ENCODE measurements at regions of chr10 and their contacts with region 1.

Region 1: DNA sequence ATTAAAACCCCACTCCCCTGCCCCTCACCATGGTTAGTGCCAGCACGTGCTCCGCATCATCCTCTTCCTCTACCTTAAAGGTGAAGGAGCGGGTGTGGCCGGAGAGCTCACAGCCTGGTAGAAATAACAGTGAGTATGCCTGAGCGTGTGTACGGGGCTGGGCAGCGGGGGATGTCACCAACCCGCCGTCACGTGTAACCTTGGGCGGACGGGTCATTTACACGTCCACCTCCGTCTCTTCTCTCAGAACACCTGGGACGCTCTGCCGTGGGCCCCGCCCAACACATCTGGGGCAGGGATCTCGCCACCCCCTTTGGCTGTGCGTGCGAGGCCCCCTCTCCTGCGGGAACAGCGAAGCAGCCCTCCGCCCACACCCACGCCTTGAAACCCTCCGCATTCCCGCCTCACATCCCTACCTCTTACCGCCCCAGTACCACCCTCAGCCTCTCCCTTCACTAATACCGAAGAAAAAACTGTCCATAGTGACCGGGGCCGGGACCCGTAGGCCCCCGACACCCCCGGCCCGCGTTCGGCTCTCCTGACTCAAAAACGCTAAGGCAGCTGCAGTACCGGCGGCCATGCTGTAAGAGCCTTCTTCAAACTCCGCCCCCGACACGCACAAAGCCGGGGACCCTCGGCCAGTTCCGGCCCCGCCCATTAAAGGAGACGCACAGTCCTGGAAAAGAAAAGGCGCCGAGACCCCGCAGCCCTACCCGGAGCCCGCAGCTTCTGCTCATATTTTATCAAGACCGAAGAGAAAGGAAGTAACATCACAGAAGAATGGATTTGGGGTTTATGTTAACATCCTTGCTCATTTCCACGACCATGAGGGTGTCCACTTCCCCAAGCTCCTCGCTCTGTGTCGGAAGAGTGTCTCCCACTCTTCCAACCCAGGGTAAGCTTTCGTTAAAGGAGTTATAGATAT is at the start of gene NPM3:
- DNase-seq: peak; percentile 93
- ATAC-seq: peak; percentile 40
- H3K4me3 Mint-ChIP-seq: peak within 1 kb of the TSS; percentile 100
- H3K27ac Mint-ChIP-seq: peak within 1 kb of the TSS; percentile 92
- H3K4me1 Mint-ChIP-seq: peaks cover 47% of the 10 kb centered on the region
- H3K27me3 Mint-ChIP-seq: peaks cover 11% of the 10 kb centered on the region
- CTCF ChIP-seq: no peak
- total RNA-seq, gene NPM3: 223 to 260 TPM (median 229 TPM) in 3 replicates

Region 2: DNA sequence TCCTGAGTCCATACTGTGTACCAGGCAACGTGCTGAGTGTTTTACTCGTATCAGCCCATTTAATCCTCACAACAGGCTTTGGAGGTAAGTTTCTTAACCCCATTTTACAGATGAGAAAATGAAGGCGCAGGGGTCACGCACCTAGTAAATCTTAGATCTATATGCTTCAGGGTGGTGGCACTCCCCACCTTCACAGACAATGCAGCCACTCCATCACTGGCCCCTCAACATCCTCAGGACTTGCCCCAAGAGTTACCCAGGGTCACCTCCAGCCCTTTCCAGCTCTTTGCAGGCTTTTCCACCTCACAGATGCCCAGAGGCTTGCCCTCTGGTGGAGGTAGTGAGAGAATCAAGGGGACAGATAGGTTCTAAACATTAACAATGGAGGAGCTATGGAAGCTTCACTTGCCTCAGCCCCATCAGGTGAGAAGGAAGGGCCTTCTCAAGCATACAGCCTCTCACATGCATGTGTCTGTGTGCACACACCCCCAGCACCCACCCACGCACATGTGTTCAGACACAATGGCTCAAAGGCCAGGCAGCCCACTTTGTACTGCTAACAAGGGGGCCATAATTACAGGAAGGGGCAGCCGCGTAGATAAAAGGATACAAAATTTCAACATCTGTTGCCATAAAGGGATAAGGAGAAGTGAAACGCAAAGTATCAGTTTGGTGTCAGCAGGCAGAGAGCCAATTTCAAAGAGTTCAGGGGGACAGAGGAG is 165.8 kb before region 1 on chr10:
- CTCF ChIA-PET with region 1: interaction called, 18 read pairs
- POLR2A ChIA-PET with region 1: no interaction called
- DNase-seq: no peak
- ATAC-seq: peak; percentile 61
- H3K4me3 Mint-ChIP-seq: no peak overlapping the region
- H3K27ac Mint-ChIP-seq: peak overlapping the region; percentile 60
- H3K4me1 Mint-ChIP-seq: peaks cover 22% of the 10 kb centered on the region
- H3K27me3 Mint-ChIP-seq: no peaks in the 10 kb centered on the region
- CTCF ChIP-seq: no peak

Region 3: DNA sequence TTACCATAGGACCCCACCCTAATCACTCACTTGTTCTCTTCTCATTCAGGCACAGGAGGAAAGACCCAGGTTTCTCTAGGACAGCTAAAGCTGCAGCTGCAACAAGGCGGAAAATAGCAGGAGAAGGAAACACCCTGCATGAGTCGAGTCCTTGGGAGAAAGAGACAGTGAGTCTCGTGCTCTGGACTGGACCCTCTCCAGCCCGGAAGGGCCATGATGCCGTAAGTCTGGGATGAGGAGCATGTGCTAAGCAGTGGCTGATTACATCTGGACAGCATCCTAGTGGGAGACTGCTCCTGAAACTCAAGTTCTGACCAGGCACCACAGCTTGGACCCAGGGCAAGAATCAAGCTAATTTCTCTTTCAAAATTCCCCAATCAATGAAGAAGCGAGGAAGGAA is 127.5 kb before region 1 on chr10:
- CTCF ChIA-PET with region 1: interaction called, 16 read pairs
- POLR2A ChIA-PET with region 1: no interaction called
- DNase-seq: no peak
- ATAC-seq: no peak
- H3K4me3 Mint-ChIP-seq: no peak overlapping the region
- H3K27ac Mint-ChIP-seq: no peak overlapping the region
- H3K4me1 Mint-ChIP-seq: peaks cover 20% of the 10 kb centered on the region
- H3K27me3 Mint-ChIP-seq: no peaks in the 10 kb centered on the region
- CTCF ChIP-seq: no peak

Region 4: DNA sequence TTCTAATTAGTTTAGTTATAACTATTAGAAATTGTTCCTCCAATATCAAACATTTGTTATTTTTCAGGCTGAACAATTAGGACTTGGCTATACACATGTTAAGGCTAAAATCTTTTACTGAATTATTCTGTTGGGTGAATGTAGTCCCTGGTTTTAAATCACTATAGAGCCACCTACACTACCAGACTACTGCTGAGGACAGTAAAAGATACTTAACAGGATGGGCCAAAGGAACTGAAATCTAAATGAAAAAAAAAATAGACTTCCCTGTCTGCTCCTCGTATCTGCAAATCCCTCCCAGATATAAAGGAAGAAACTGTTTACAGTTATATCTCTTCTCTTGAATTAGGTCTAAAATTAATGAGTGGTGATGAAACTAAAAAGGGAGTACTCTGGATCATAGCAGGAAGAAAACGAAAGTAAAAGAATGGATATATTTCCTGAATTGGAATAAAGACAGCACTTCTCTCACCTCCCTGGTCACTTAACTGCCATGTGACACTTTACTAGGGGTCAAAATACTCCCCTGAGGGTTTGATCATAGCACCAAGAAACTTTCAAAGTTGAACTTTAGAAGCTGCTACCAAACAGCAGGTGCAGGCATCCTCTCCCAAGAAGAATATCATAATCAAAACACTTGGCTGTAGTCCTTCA is 100.8 kb before region 1 on chr10:
- CTCF ChIA-PET with region 1: no interaction called
- POLR2A ChIA-PET with region 1: no interaction called
- DNase-seq: no peak
- ATAC-seq: no peak
- H3K4me3 Mint-ChIP-seq: no peak overlapping the region
- H3K27ac Mint-ChIP-seq: peak overlapping the region; percentile 23; the same call in 1 of the 2 replicates
- H3K4me1 Mint-ChIP-seq: peaks cover 22% of the 10 kb centered on the region
- H3K27me3 Mint-ChIP-seq: no peaks in the 10 kb centered on the region
- CTCF ChIP-seq: no peak

Region 5: GRCh38 chr10:101736666-101737065 is 46.4 kb before region 1 on chr10:
- CTCF ChIA-PET with region 1: interaction called, 15 read pairs
- POLR2A ChIA-PET with region 1: no interaction called
- DNase-seq: no peak
- ATAC-seq: peak; percentile 55
- H3K4me3 Mint-ChIP-seq: no peak overlapping the region
- H3K27ac Mint-ChIP-seq: no peak overlapping the region
- H3K4me1 Mint-ChIP-seq: 0 out of 2 replicates have a peak, but pooled peaks cover 3% of the 10 kb centered on the region
- H3K27me3 Mint-ChIP-seq: no peaks in the 10 kb centered on the region; the same call in 1 of the 2 replicates
- CTCF ChIP-seq: no peak

Region 6: GRCh38 chr10:101759309-101760247 is 23.5 kb before region 1 on chr10:
- CTCF ChIA-PET with region 1: interaction called, 24 read pairs
- POLR2A ChIA-PET with region 1: no interaction called
- DNase-seq: no peak
- ATAC-seq: peak; percentile 83
- H3K4me3 Mint-ChIP-seq: no peak overlapping the region
- H3K27ac Mint-ChIP-seq: no peak overlapping the region
- H3K4me1 Mint-ChIP-seq: peaks cover 19% of the 10 kb centered on the region
- H3K27me3 Mint-ChIP-seq: peaks cover 11% of the 10 kb centered on the region
- CTCF ChIP-seq: no peak

Region 7: DNA sequence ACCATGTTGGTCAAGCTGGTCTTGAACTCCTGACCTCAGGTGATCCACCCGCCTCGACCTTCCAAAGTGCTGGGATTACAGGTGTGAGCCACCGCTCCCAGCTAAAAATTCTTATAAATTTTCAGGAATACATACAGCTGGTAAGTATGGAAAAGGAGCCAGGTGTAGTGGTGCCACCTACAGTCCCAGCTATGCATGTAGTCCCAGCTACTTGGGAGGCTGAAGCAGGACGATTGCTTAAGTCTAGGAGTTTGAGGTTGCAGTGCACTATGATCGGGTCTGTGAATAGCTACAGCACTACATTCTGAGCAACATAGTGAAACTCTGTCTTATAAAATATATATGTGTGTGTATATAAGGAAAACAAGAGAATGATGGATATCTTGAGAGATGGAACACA is 318.1 kb after region 1 on chr10:
- CTCF ChIA-PET with region 1: no interaction called
- POLR2A ChIA-PET with region 1: no interaction called
- DNase-seq: no peak
- ATAC-seq: peak; percentile 76
- H3K4me3 Mint-ChIP-seq: no peak overlapping the region
- H3K27ac Mint-ChIP-seq: no peak overlapping the region
- H3K4me1 Mint-ChIP-seq: no peaks in the 10 kb centered on the region
- H3K27me3 Mint-ChIP-seq: no peaks in the 10 kb centered on the region
- CTCF ChIP-seq: no peak